ENCODE measurements at regions of chr21 and their contacts with region 1.

Region 1: DNA sequence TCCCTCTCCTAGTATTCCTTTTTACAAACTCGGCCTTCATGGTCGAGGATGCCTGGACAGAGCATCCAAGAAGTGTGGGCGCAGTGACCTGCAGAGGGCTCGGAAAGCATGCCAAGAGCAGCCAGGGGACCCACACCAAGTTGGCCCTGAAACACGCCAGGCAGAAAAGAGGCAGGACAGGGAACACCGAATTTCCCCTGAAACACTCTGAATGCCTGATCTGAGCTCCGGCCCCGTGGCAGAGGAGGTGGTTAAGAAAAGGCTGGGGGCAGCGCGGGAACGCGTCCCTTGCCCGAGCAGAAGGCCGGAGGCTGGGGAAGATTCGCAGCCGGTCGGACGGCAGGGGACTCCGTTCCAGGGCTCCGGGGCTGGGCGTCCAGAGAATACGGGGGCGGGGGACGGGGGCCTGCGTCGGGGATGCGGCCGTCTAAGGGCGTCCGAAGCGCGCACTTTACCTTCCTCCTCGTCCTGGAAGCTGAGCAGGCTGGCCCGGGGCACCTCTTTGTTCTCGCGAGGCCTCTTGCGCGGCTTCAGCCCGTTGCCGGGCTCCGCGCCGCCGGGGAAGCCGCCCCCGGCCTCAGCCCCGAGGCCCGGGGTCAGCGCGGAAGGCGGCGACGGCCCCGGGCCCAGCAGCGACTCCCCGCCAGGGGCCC is 558 bp downstream of the PAXBP1 start:
- DNase-seq: no peak
- H3K4me3 Mint-ChIP-seq: peak overlapping the region; percentile 99
- H3K27ac Mint-ChIP-seq: peak overlapping the region; percentile 98
- H3K4me1 Mint-ChIP-seq: peaks cover 66% of the 10 kb centered on the region
- H3K27me3 Mint-ChIP-seq: peaks cover 3% of the 10 kb centered on the region

Region 2: DNA sequence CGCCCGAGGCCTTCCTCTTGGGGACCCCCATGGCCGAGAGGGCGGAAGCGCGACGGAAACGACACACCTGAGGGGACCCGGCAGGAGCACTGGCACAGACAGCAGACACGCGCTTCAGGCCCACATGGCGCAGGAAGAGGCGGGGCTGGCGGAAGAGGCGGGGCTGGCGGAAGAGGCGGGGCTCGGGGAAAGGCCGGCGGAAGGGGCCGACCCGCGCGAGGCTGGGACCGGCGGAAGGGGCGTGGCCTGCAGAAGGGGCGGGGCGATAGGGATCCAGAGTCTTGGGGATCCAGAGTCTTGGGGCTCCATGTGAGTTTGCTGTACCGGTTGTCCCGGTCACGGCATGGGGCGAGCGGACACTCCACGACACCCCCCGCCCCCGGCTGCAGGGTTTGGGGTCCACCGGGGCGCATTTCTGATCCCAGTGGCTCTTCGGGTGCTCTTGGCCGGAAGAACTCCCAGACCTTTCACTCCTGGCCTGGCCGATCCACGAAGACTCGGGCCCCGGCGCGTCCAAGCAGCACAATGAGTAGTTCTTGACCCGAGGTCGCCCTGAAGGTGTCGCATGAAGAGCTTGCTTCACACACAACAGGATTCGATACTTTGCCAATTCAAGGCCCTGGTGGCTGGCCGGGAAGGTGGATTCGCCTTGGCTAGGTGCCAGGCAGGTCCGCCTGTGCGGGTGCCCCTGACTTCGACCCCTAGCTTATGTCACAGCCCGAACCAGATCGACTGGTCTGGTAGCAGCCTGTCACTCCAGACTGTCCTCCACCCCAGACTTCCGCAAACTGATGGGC is 377.9 kb before region 1 on chr21 and contains the start of gene URB1:
- intact Hi-C with region 1: loop called (anchors 1 kb)
- DNase-seq: peak; percentile 89
- H3K4me3 Mint-ChIP-seq: peak within 1 kb of the TSS; percentile 91
- H3K27ac Mint-ChIP-seq: peak within 1 kb of the TSS; percentile 88
- H3K4me1 Mint-ChIP-seq: peaks cover 48% of the 10 kb centered on the region
- H3K27me3 Mint-ChIP-seq: peaks cover 3% of the 10 kb centered on the region
- total RNA-seq, gene URB1: 42.1 and 42.8 TPM in 2 replicates

Region 3: DNA sequence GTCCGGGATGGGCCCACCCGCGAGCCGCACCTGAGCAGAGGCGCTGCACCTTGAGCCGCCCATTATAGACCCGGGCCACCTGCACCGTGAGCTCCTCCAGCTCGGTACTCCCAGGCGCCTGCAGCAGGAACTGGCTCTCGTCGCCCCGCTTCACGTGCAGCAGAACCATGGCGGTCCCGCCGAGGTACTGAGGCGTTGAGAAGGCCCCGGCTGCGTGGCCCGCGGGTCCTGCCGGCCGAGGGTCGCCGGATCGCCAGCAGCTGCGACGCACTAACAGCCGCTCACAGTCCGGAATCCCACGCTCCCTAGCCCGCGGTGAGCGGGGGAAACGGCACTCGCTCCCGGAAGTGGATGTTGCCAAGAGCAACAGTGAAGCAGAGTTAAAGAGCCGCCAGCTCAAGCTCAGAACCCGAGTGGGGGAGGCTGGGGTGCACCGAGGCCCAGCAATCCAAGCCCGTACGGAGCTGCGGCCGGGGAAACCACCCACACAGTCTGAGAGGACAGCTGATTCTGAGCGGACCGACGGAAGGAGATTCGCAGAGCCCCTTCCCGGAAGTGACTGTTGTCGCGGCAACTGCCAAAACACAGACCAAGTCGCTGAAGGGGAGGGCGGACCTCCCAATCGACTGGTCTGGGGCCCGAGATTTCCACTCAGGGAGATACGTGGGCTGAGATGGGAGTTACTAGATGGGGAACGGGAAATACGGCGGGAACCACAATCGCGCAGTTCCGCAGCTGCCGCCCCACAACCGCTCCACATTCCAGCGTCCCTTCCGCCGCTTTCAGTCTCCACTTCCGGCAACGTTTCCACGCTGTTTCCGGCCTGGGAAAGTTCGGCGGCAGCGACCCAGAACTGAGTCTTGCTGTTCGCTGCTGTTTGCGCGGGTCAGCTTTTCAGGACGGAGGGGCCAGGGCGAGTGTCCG is 158.7 kb before region 1 on chr21 and contains the start of gene CFAP298:
- intact Hi-C with region 1: loop called (anchors 1 kb)
- DNase-seq: peak; percentile 84
- H3K4me3 Mint-ChIP-seq: peak within 1 kb of the TSS; percentile 96
- H3K27ac Mint-ChIP-seq: peak within 1 kb of the TSS; percentile 93
- H3K4me1 Mint-ChIP-seq: peaks cover 8% of the 10 kb centered on the region
- H3K27me3 Mint-ChIP-seq: peaks cover 4% of the 10 kb centered on the region
- total RNA-seq, gene CFAP298: 52.9 and 54.6 TPM in 2 replicates

Region 4: DNA sequence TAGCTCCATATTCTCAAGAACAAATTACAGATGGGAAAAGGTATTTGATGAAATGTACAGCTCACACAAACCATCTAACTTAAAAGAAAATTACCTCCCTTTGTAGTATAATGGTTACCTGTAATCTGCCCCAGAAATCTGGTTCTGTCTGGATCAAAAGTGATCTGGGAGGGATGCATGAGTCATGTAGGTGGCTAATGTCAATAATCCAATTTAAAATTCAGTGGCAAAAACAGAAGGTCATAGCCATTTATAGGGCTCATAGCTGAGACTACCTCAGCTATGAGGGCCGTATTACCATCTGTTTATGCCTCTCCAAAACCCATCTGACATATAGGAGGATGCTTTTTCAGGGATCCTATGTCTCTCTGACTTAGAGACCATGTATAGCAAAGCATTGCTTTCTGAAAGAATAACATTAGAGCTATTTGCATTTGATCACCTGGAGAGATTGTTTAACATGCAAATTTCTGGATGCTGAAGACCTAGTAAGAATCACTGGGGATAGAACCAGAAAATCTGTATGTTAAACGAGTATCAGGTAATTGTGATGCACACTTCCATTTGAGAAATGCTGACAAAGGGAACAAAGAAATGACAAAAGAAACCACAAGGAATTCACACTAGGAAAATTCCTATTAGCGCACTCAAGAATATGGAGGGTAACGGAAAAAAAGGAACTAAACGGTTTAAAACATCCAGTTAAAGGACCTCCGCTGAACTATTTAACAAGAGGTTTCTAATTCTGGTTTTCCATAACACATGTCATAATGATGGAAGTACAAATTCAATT is 17.0 kb before region 1 on chr21:
- intact Hi-C with region 1: loop called (anchors 2 kb)
- DNase-seq: no peak
- H3K4me3 Mint-ChIP-seq: no peak overlapping the region
- H3K27ac Mint-ChIP-seq: no peak overlapping the region
- H3K4me1 Mint-ChIP-seq: peaks cover 15% of the 10 kb centered on the region
- H3K27me3 Mint-ChIP-seq: no peaks in the 10 kb centered on the region

Region 5: GRCh38 chr21:32929633-32930038 is 158.6 kb after region 1 on chr21:
- intact Hi-C with region 1: loop called (anchors 1 kb)
- DNase-seq: no peak
- H3K4me3 Mint-ChIP-seq: no peak overlapping the region
- H3K27ac Mint-ChIP-seq: no peak overlapping the region
- H3K4me1 Mint-ChIP-seq: peaks cover 31% of the 10 kb centered on the region
- H3K27me3 Mint-ChIP-seq: no peaks in the 10 kb centered on the region

Region 6: GRCh38 chr21:33434770-33435360 is 663.9 kb after region 1 on chr21:
- intact Hi-C with region 1: loop called (anchors 1 kb)
- DNase-seq: peak; percentile 33
- H3K4me3 Mint-ChIP-seq: peak overlapping the region; percentile 13
- H3K27ac Mint-ChIP-seq: peak overlapping the region; percentile 33
- H3K4me1 Mint-ChIP-seq: peaks cover 33% of the 10 kb centered on the region
- H3K27me3 Mint-ChIP-seq: peaks cover 4% of the 10 kb centered on the region

Region 7: GRCh38 chr21:33588485-33589335 is 817.7 kb after region 1 on chr21 and contains the start of gene DONSON:
- intact Hi-C with region 1: loop called (anchors 1 kb)
- DNase-seq: peak; percentile 90
- H3K4me3 Mint-ChIP-seq: peak within 1 kb of the TSS; percentile 92
- H3K27ac Mint-ChIP-seq: peak within 1 kb of the TSS; percentile 84
- H3K4me1 Mint-ChIP-seq: peaks cover 31% of the 10 kb centered on the region
- H3K27me3 Mint-ChIP-seq: no peaks in the 10 kb centered on the region
- total RNA-seq, gene DONSON: 37.5 and 38.7 TPM in 2 replicates

Measured in activated T-helper 1 cell treated with anti-CD3 and anti-CD28 coated beads, Interleukin-12 subunit alpha, Interleukin-12 subunit beta, Interleukin-2, Interleukin-4 antibody, amounts not matched to agents 30 ng/mL and 10 ng/mL and 1 ng/mL, durations not matched to agents 14 hours and 24 hours and 36 hours (primary cell).